HEK293T (cell line): ENCODE measurements at regions of chr10 and their contacts with region 1.

Region 1: GRCh38 chr10:91551856-91552255 is 81.0 kb downstream of the PPP1R3C start:
- DNase-seq: peak; percentile 60

Region 2: GRCh38 chr10:91298224-91298871 is 253.5 kb before region 1 on chr10:
- CTCF ChIA-PET with region 1: interaction called, 17 read pairs
- POLR2A ChIA-PET with region 1: no interaction called
- DNase-seq: peak; percentile 82

Region 3: DNA sequence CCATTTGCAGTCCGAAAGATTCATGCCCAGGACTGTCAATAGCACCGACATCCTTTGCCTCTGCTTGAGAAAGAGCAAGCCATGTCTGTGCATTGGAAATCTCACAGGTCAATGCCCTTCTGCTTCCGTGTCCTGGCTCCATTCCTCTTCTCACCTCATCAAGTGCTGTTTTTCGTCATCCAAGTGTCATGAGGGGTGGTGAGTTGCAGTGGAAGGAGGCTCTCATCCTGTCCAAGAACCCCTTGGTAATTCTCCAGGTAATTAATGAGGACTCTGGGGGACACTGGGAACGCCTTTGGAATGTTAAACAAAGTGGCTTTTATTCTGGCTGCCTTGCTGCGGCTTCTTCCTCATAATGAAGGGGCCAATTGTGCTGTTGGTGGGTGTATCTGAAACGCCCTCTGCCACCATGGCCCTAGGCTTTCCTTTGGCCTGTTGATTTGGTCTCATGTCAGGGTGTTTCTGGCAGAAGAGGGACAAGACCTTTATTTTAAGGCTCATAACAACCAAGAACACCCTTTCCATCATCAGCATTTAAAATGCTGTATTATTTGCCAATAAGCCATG is 23.3 kb after region 1 on chr10:
- CTCF ChIA-PET with region 1: no interaction called
- POLR2A ChIA-PET with region 1: no interaction called
- DNase-seq: no peak